ENCODE measurements at regions of chr4 and their contacts with region 1.

Region 1: GRCh38 chr4:152606754-152607153 is 70.9 kb upstream of the FBXW7 start:
- DNase-seq: no peak
- ATAC-seq: no peak
- H3K4me3 ChIP-seq: no peak overlapping the region
- H3K27ac ChIP-seq: no peak overlapping the region
- H3K4me1 ChIP-seq: no peaks in the 10 kb centered on the region
- H3K27me3 ChIP-seq: peaks cover 0 to 14% of the 10 kb centered on the region in 2 experiments; a peak in 2 of 5 replicates
- CTCF ChIP-seq: no peak
- EP300 ChIP-seq: no peak
- POLR2A ChIP-seq: no peak
- RAD21 ChIP-seq: no peak

Region 2: GRCh38 chr4:152369902-152370295 is 236.9 kb before region 1 on chr4:
- CTCF ChIA-PET with region 1: no interaction called
- POLR2A ChIA-PET with region 1: no interaction called
- in situ Hi-C with region 1: no loop called
- intact Hi-C with region 1: no loop called
- DNase-seq: no peak
- ATAC-seq: no peak
- H3K4me3 ChIP-seq: no peak overlapping the region
- H3K27ac ChIP-seq: no peak overlapping the region
- H3K4me1 ChIP-seq: no peaks in the 10 kb centered on the region
- H3K27me3 ChIP-seq: no peaks in the 10 kb centered on the region
- CTCF ChIP-seq: no peak
- EP300 ChIP-seq: no peak
- POLR2A ChIP-seq: no peak
- RAD21 ChIP-seq: no peak

Region 3: GRCh38 chr4:152479428-152480026 is 127.2 kb before region 1 on chr4:
- CTCF ChIA-PET with region 1: no interaction called
- POLR2A ChIA-PET with region 1: no interaction called
- in situ Hi-C with region 1: no loop called
- intact Hi-C with region 1: no loop called
- DNase-seq: no peak
- ATAC-seq: no peak
- H3K4me3 ChIP-seq: no peak overlapping the region
- H3K27ac ChIP-seq: no peak overlapping the region
- H3K4me1 ChIP-seq: peaks cover 71% of the 10 kb centered on the region
- H3K27me3 ChIP-seq: no peaks in the 10 kb centered on the region
- CTCF ChIP-seq: no peak
- EP300 ChIP-seq: no peak
- POLR2A ChIP-seq: no peak
- RAD21 ChIP-seq: no peak

Region 4: GRCh38 chr4:152646221-152646620 is 39.5 kb after region 1 on chr4:
- CTCF ChIA-PET with region 1: no interaction called
- POLR2A ChIA-PET with region 1: no interaction called
- in situ Hi-C with region 1: no loop called
- intact Hi-C with region 1: loop called (anchors 1 kb)
- DNase-seq: no peak
- ATAC-seq: no peak
- H3K4me3 ChIP-seq: no peak overlapping the region
- H3K27ac ChIP-seq: no peak overlapping the region
- H3K4me1 ChIP-seq: peaks cover 27% of the 10 kb centered on the region
- H3K27me3 ChIP-seq: no peaks in the 10 kb centered on the region
- CTCF ChIP-seq: no peak
- EP300 ChIP-seq: no peak
- POLR2A ChIP-seq: no peak
- RAD21 ChIP-seq: no peak

Measured in HepG2 (cell line).